Activated B cell treated with CpG ODN at 0.5 μM for 24 hours (primary cell): ENCODE measurements at regions of chr22 and their contacts with region 1.

Region 1: DNA sequence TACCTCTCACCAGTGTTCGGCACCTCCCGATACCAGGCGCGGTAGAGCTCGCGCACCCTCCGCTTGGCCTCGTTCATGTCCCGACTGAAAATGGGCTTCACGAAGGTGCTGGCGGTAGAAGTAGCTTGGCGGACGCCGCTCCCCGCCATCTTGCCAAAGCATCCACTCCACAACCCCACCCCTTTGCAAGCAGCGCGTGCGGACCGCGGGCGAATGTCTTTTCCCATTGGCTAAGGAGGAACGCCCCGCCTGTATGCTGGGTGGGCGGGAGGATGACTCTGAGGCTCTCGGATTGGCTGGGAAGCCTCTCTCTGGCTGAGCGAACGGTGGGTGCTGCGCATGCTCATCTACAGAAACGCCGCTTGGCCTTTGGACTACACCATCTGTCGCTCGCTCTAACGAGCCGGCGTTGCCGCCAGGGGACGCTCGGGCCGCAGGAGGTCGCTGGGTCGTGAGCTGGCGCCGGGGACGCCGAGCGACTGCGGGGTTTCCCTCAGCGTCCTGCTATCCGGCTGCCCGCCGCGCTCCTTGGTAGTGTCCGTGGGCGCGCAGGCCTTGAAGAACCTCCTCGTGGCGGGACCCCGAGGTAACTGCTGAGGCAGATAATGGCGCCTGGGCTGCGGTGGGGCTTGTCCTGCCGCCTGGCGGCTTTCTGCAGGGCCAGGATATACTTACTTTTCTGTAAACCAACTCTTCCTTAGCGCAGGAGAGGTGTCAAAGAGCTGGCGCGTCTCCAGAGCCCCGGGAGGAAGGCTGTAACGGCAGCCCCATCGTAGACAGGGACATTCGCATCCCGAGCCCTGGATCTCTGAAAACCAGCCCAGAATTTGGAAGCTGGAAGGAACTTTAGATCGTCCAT is at the start of gene NDUFA6:
- DNase-seq: peak; percentile 93
- ATAC-seq: peak; percentile 88
- H3K4me3 Mint-ChIP-seq: peak within 1 kb of the TSS; percentile 97
- H3K27ac Mint-ChIP-seq: peak within 1 kb of the TSS; percentile 98
- H3K4me1 Mint-ChIP-seq: peaks cover 32% of the 10 kb centered on the region
- H3K27me3 Mint-ChIP-seq: no peaks in the 10 kb centered on the region
- CTCF ChIP-seq: peak; percentile 44
- total RNA-seq, gene NDUFA6: 73.6 and 83.2 TPM in 2 replicates

Region 2: GRCh38 chr22:41800348-41801146 is 290.3 kb before region 1 on chr22 and contains the start of gene CCDC134:
- CTCF ChIA-PET with region 1: no interaction called
- POLR2A ChIA-PET with region 1: interaction called, 10 read pairs
- intact Hi-C with region 1: loop called (anchors 10 kb)
- DNase-seq: peak; percentile 88
- ATAC-seq: peak; percentile 98
- H3K4me3 Mint-ChIP-seq: peak within 1 kb of the TSS; percentile 98
- H3K27ac Mint-ChIP-seq: peak within 1 kb of the TSS; percentile 97
- H3K4me1 Mint-ChIP-seq: peaks cover 34% of the 10 kb centered on the region
- H3K27me3 Mint-ChIP-seq: no peaks in the 10 kb centered on the region
- CTCF ChIP-seq: no peak
- total RNA-seq, gene CCDC134: 9.2 and 13.2 TPM in 2 replicates

Region 3: DNA sequence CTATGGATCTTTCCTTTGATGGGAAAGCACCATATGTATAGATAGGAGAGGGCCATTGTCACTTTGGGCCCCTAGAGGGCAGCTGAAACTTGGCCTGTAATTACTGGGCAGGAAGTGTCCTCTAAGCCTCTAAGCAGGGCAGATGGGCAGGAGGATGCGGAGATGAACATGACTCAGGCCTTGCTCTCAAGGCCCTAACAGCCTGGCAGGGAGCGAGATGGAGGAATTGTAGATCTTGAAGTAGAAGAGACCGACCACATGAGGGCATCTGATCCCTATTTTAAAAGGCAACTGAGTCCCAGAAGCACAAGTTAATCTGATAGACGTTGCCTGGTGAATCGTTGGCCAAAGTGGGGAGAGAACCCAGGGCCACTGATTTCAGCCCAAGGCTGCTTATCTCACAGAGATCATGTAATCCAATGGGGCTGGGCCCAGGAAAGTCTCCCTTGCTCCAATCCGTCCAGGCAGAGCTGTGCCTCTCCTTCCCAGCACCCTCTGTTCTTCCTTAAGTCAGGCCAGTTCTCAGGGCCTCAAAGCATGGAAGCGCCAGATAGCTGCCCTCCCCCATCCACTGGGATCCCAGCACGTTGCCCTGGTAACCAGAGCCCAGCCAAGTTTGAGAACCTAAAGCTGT is 124.1 kb before region 1 on chr22:
- CTCF ChIA-PET with region 1: interaction called, 12 read pairs
- POLR2A ChIA-PET with region 1: interaction called, 7 read pairs
- intact Hi-C with region 1: loop called (anchors 1 kb)
- DNase-seq: no peak
- ATAC-seq: peak; percentile 89
- H3K4me3 Mint-ChIP-seq: no peak overlapping the region
- H3K27ac Mint-ChIP-seq: no peak overlapping the region
- H3K4me1 Mint-ChIP-seq: no peaks in the 10 kb centered on the region
- H3K27me3 Mint-ChIP-seq: peaks cover 10% of the 10 kb centered on the region
- CTCF ChIP-seq: no peak

Region 4: DNA sequence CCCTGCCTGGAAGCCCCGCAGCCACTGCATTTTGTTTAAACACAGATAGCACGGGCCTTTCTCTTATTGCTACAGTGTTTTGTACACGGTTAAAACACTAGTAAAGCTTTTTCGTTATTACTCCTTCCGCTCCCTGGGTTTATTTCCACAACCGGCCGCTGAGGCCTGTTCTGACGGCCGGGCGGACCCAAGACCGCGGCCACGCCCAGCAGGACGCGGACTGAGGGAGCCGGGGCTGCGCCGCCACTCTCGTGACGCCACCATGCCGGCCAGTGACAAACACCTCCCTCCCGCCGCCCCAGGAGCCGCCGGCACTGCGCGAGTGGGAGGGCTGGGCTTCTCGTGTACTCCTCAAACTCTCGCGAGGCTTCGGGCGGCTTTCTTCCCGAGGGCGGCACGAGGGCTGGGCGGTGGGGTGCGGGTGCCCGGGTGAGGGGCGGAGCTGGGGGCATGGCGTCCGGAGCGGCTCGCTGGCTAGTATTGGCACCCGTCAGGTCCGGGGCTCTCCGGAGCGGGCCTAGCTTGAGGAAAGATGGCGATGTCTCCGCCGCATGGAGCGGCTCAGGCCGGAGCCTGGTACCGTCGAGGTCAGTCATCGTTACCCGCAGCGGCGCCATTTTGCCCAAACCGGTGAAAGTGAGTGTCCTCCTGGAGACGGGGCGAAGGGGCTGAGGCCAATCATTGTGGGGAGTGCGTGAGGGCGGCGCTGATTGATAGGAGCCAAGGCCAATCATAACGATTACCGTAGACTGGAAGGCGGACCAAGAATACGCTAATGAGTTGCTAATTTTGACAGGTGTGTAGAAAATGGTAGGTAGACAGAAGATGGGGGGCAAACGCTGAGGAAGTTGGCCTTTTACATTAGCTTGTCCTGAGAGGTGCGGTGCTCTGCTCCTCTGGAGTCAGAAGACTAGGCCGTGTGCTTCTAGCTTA is 11.2 kb before region 1 on chr22 and contains the start of gene SMDT1:
- CTCF ChIA-PET with region 1: interaction called, 17 read pairs
- POLR2A ChIA-PET with region 1: interaction called, 174 read pairs
- intact Hi-C with region 1: loop called (anchors 1 kb)
- DNase-seq: peak; percentile 97
- ATAC-seq: peak; percentile 89
- H3K4me3 Mint-ChIP-seq: peak within 1 kb of the TSS; percentile 95
- H3K27ac Mint-ChIP-seq: peak within 1 kb of the TSS; percentile 97
- H3K4me1 Mint-ChIP-seq: peaks cover 38% of the 10 kb centered on the region
- H3K27me3 Mint-ChIP-seq: no peaks in the 10 kb centered on the region
- CTCF ChIP-seq: no peak
- total RNA-seq, gene SMDT1: 165 and 167 TPM in 2 replicates

Region 5: DNA sequence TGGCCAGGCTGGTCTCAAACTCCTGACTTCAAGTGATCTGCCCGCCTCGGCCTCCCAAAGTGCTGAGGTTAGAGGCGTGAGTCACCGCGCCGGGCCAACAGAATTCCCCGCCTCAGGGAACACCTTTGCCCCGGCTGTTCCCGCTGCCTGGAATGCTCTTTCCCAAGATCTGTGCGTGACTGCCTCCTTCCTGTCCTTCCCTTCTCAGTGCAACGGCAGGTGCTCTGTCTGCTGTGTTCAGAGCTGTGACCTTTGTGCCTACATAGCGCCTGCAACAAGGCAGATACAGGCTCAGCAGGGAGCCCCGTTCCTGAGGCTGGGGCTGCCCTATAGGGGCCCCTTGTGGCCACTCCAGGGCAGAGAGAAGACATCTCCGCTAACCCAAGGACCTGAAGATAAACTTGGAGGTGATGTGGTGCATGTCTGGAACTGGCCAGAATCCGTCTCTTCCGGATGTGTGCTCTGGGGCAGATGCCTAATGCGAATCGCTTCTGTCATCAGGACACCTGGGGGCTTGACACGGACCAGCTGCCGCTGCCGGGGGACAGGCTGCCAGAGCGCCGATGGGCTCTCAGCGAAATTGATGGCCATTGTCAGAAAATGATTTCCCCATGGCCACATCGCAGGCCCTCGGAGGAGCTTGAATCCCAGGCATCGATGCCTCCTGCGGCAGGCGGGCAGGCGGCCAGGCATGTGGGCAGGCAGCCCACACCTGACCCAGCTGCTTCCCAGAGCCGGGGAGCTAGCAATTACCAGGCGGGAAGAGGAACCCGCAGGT is 223.2 kb after region 1 on chr22:
- CTCF ChIA-PET with region 1: interaction called, 4 read pairs
- POLR2A ChIA-PET with region 1: no interaction called
- intact Hi-C with region 1: loop called (anchors 5 kb)
- DNase-seq: no peak
- ATAC-seq: peak; percentile 64
- H3K4me3 Mint-ChIP-seq: no peak overlapping the region
- H3K27ac Mint-ChIP-seq: no peak overlapping the region
- H3K4me1 Mint-ChIP-seq: peaks cover 15% of the 10 kb centered on the region
- H3K27me3 Mint-ChIP-seq: peaks cover 24% of the 10 kb centered on the region
- CTCF ChIP-seq: no peak

Region 6: GRCh38 chr22:42553475-42554361 is 462.9 kb after region 1 on chr22 and contains the start of gene SERHL2:
- CTCF ChIA-PET with region 1: no interaction called
- POLR2A ChIA-PET with region 1: interaction called, 4 read pairs
- intact Hi-C with region 1: loop called (anchors 2 kb)
- DNase-seq: peak; percentile 97
- ATAC-seq: peak; percentile 95
- H3K4me3 Mint-ChIP-seq: peak within 1 kb of the TSS; percentile 86
- H3K27ac Mint-ChIP-seq: peak within 1 kb of the TSS; percentile 80
- H3K4me1 Mint-ChIP-seq: peaks cover 52% of the 10 kb centered on the region
- H3K27me3 Mint-ChIP-seq: no peaks in the 10 kb centered on the region
- CTCF ChIP-seq: no peak
- total RNA-seq, gene SERHL2: 0.91 and 1.7 TPM in 2 replicates